GM12878 (cell line): ENCODE measurements at regions of chr11 and their contacts with region 1.

Region 1: GRCh38 chr11:125345421-125346178 is 150.5 kb downstream of the FEZ1 start:
- DNase-seq: no peak
- ATAC-seq: peak; percentile 80
- H3K4me3 ChIP-seq: no peak overlapping the region
- H3K27ac ChIP-seq: no peak overlapping the region
- H3K4me1 ChIP-seq: no peaks in the 10 kb centered on the region
- H3K27me3 ChIP-seq: peaks cover 0 to 13% of the 10 kb centered on the region in 2 experiments; a peak in 2 of 4 replicates
- CTCF ChIP-seq: peak; percentile 68 to 76 (median 73)
- EP300 ChIP-seq: no peak
- POLR2A ChIP-seq: no peak
- RAD21 ChIP-seq: peak; percentile 50

Region 2: DNA sequence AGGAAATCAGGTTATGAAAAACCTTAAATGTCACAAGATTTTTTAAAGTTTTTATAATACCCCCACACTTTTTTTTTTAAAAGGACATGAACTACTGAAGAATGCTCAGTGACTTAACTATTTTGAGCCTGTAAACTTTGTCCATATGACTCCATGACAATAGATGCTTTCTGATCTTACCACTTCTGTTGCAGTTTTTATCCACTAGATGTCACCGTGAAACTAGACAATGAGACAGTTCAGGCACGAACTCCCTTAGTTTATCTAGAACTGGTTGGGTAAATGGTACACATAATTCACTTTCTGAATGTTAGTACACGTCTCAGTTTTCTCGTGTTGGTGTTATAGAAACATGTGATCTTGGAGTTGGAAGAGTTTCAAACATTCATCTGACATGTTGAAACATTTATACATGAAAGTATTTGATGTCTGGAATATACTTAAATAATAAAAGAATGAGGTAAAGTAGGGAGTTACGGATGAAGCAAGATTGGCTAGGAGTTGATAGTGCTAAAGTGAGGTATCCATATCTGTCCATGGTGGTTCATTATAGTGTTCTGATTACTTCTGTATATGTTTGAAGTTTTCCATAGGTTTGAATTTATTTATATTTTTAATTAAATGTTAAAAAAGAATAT is 383.5 kb before region 1 on chr11:
- CTCF ChIA-PET with region 1: interaction called, 17 read pairs
- POLR2A ChIA-PET with region 1: no interaction called
- RAD21 ChIA-PET with region 1: interaction called, 5 read pairs
- SMC1A ChIA-PET with region 1: interaction called, 3 read pairs
- in situ Hi-C with region 1: loop called (anchors 5 kb)
- intact Hi-C with region 1: loop called (anchors 1 kb)
- DNase-seq: peak; percentile 51
- ATAC-seq: peak; percentile 97
- H3K4me3 ChIP-seq: no peak overlapping the region
- H3K27ac ChIP-seq: no peak overlapping the region
- H3K4me1 ChIP-seq: no peaks in the 10 kb centered on the region
- H3K27me3 ChIP-seq: no peaks in the 10 kb centered on the region
- CTCF ChIP-seq: peak; percentile 67 to 91 (median 74); a peak in 5 of 6 replicates
- EP300 ChIP-seq: no peak
- POLR2A ChIP-seq: no peak
- RAD21 ChIP-seq: peak; percentile 97

Region 3: GRCh38 chr11:125141686-125142535 is 203.7 kb before region 1 on chr11:
- CTCF ChIA-PET with region 1: interaction called, 8 read pairs
- POLR2A ChIA-PET with region 1: no interaction called
- RAD21 ChIA-PET with region 1: interaction called, 14 read pairs
- SMC1A ChIA-PET with region 1: interaction called, 7 read pairs
- in situ Hi-C with region 1: no loop called
- intact Hi-C with region 1: no loop called
- DNase-seq: no peak
- ATAC-seq: peak; percentile 98
- H3K4me3 ChIP-seq: no peak overlapping the region
- H3K27ac ChIP-seq: no peak overlapping the region
- H3K4me1 ChIP-seq: no peaks in the 10 kb centered on the region
- H3K27me3 ChIP-seq: peaks cover 0 to 2% of the 10 kb centered on the region in 2 experiments; a peak in 1 of 4 replicates
- CTCF ChIP-seq: peak; percentile 88 to 94 (median 92)
- EP300 ChIP-seq: no peak
- POLR2A ChIP-seq: no peak
- RAD21 ChIP-seq: peak; percentile 78

Region 4: DNA sequence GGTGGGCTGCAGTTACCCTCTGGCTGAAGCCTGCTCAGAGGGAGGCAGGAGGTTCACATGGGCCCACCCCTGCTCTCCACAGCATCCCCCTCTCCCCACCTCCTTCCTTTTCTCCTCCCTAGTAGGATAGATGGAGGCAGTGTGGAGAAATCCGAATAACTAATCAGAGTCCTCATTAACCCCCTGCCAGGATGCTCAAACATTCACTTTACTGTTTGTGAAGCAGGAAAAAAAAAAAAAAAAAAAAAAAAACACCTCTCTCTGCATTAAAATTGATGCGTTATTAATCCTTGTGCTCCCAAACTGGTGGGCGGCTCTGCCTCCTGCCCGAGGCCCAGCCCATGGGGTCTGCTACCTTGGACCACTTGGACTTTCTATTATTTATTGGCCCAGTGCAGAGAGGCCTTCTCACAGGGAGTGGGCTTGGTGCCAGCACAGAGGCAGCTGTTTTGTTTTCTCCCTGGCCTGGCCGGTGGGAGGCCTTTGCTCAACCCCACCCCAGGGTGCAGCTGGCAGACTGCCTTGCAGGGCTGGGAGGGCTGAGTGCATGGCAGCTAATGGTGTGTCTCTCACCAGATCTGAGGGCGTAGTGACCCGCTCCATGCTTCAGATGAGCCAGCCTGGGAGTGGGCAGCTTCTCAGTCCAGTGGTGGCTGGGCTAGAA is 30.4 kb before region 1 on chr11:
- CTCF ChIA-PET with region 1: no interaction called
- POLR2A ChIA-PET with region 1: no interaction called
- RAD21 ChIA-PET with region 1: no interaction called
- SMC1A ChIA-PET with region 1: no interaction called
- in situ Hi-C with region 1: no loop called
- intact Hi-C with region 1: no loop called
- DNase-seq: no peak
- ATAC-seq: no peak
- H3K4me3 ChIP-seq: no peak overlapping the region
- H3K27ac ChIP-seq: no peak overlapping the region
- H3K4me1 ChIP-seq: no peaks in the 10 kb centered on the region
- H3K27me3 ChIP-seq: peaks cover 0 to 8% of the 10 kb centered on the region in 2 experiments; a peak in 3 of 4 replicates
- CTCF ChIP-seq: no peak
- EP300 ChIP-seq: no peak
- POLR2A ChIP-seq: no peak
- RAD21 ChIP-seq: no peak

Region 5: DNA sequence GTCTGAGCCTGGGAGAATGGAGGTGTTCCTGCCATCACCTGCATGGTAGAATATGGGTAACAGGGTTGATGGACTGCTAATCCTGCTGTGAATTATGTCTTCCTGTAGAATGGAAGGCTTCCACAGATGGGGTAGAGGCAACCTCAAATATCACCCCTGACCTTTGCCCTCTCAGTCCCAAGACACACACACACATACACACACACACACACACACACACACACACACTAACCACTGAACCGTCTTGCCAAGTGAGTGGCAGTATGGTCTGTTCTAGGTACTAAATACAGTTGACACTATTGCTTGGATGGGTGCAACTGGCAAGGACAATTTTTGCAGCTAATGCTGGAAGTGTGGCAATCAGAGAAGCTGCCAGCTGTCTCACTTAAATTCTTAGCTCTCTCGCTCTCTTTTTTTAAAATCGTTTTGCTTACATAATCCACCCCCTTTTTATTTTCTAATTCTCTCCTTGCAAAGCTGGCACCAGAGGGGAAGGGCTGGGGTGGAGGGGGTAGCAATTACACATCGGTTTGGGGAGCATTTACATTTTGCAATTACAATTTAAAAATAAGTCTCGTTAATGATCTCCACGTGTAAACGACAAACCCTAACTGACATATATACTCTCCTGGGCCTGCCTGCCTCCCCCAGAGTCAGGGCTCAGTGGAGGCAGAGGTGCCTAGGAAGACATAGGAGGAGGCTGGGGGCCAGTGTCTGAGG is 12.1 kb before region 1 on chr11:
- CTCF ChIA-PET with region 1: interaction called, 17 read pairs
- POLR2A ChIA-PET with region 1: no interaction called
- RAD21 ChIA-PET with region 1: no interaction called
- SMC1A ChIA-PET with region 1: interaction called, 4 read pairs
- in situ Hi-C with region 1: no loop called
- intact Hi-C with region 1: no loop called
- DNase-seq: no peak
- ATAC-seq: no peak
- H3K4me3 ChIP-seq: no peak overlapping the region
- H3K27ac ChIP-seq: no peak overlapping the region
- H3K4me1 ChIP-seq: no peaks in the 10 kb centered on the region
- H3K27me3 ChIP-seq: peaks cover 4 to 9% of the 10 kb centered on the region in 2 experiments; a peak in 3 of 4 replicates
- CTCF ChIP-seq: no peak
- EP300 ChIP-seq: no peak
- POLR2A ChIP-seq: no peak
- RAD21 ChIP-seq: no peak

Region 6: GRCh38 chr11:125376117-125376516 is 30.5 kb after region 1 on chr11:
- CTCF ChIA-PET with region 1: interaction called, 42 read pairs
- POLR2A ChIA-PET with region 1: no interaction called
- RAD21 ChIA-PET with region 1: interaction called, 7 read pairs
- SMC1A ChIA-PET with region 1: interaction called, 11 read pairs
- in situ Hi-C with region 1: no loop called
- intact Hi-C with region 1: no loop called
- DNase-seq: no peak
- ATAC-seq: peak; percentile 45
- H3K4me3 ChIP-seq: no peak overlapping the region
- H3K27ac ChIP-seq: no peak overlapping the region
- H3K4me1 ChIP-seq: no peaks in the 10 kb centered on the region
- H3K27me3 ChIP-seq: peaks cover 0 to 1% of the 10 kb centered on the region in 2 experiments; a peak in 3 of 4 replicates
- CTCF ChIP-seq: no peak
- EP300 ChIP-seq: no peak
- POLR2A ChIP-seq: no peak
- RAD21 ChIP-seq: no peak

Region 7: GRCh38 chr11:125404776-125405435 is 59.3 kb after region 1 on chr11:
- CTCF ChIA-PET with region 1: interaction called, 71 read pairs
- POLR2A ChIA-PET with region 1: no interaction called
- RAD21 ChIA-PET with region 1: interaction called, 8 read pairs
- SMC1A ChIA-PET with region 1: interaction called, 7 read pairs
- in situ Hi-C with region 1: no loop called
- intact Hi-C with region 1: no loop called
- DNase-seq: no peak
- ATAC-seq: peak; percentile 97
- H3K4me3 ChIP-seq: no peak overlapping the region
- H3K27ac ChIP-seq: no peak overlapping the region
- H3K4me1 ChIP-seq: no peaks in the 10 kb centered on the region
- H3K27me3 ChIP-seq: peaks cover 4 to 12% of the 10 kb centered on the region in 2 experiments
- CTCF ChIP-seq: peak; percentile 89 to 98 (median 92)
- EP300 ChIP-seq: no peak
- POLR2A ChIP-seq: no peak
- RAD21 ChIP-seq: peak; percentile 75

Region 8: DNA sequence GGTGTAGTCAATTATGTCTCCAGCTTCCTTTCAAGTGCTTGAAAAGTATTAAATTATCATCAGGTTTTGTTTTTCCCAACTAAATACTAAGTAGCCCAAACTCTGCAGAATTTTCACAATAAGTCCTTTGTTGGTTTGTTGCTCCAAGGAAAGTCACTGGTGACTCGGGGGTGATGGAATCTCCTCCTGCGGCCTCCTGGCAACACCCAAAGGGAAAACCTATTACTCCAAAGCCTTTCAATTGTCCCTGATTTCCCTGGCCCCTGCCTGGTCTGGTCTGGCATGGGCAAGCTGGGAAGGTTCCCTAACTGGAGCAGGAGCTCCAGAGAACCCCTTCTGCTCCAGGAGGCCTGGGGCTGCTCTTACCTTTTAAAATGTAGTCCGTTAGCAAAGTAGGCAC is 102.5 kb after region 1 on chr11:
- CTCF ChIA-PET with region 1: no interaction called
- POLR2A ChIA-PET with region 1: no interaction called
- RAD21 ChIA-PET with region 1: no interaction called
- SMC1A ChIA-PET with region 1: no interaction called
- in situ Hi-C with region 1: no loop called
- intact Hi-C with region 1: no loop called
- DNase-seq: no peak
- ATAC-seq: no peak
- H3K4me3 ChIP-seq: no peak overlapping the region
- H3K27ac ChIP-seq: no peak overlapping the region
- H3K4me1 ChIP-seq: no peaks in the 10 kb centered on the region
- H3K27me3 ChIP-seq: no peaks in the 10 kb centered on the region
- CTCF ChIP-seq: no peak
- EP300 ChIP-seq: no peak
- POLR2A ChIP-seq: no peak
- RAD21 ChIP-seq: no peak